Head of caudate nucleus (tissue), 42 donors: ENCODE measurements at regions of chr18 and their contacts with region 1.

Region 1: DNA sequence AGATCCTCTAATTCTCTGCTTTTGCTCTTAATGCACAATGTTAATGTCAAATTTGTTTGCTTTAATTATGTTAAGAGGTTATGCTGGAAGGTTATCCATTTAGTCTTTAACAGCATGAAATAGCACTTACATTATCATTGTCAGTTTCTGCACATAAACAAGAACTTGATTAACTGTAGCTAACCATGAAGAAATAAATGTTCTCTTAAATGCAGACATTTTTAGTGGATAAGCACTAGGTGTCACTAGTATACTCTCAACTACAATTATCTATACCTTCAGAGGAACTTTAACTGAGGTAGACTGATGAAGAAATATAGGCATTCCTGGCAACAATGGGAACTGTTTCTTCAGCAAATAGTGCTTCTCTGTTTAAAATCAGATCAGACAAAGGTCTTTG is 178.8 kb upstream of the CHST9 start:
- DNase-seq: no peak

Region 2: DNA sequence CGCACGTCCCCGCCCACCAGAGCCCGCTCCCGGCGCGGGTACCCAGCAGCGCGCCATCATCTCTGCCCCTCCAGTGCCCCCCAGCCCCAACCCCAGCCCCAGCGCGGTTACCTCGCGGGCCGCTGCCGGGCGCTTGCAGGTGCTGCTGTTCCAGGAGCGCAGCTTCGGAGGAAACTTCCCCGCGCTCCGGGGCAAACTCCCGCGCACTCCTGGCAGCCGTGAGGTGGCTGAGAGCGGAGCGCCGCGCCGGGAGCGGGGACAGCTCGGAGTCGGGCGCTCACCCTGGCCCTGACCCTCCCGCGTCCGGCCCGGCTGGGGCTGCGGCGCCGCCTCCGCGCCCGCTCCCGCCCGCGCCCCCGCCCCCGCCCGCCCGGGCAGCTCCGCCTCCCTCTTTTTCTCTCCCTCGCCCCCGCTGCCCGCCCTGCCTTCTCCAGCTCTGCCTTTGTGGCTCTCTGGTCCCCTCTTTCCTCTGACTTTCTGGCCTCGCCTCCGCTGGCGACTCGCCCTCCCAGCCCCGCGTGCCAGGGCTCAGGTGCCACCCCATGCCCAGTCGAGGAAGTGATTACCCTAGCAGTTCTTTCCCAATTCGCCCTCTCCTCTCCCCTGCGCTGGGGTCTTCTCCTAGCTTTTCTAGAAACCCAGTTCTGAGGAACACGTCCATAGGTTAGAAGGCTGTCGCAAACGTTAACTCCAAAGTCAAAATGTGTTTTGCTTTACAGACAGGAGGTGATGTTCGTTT is 178.7 kb before region 1 on chr18 and contains the start of gene CHST9:
- intact Hi-C with region 1: no loop called
- DNase-seq: peak in 40 of 42 donors; percentile 13 to 72 (median 42)

Region 3: DNA sequence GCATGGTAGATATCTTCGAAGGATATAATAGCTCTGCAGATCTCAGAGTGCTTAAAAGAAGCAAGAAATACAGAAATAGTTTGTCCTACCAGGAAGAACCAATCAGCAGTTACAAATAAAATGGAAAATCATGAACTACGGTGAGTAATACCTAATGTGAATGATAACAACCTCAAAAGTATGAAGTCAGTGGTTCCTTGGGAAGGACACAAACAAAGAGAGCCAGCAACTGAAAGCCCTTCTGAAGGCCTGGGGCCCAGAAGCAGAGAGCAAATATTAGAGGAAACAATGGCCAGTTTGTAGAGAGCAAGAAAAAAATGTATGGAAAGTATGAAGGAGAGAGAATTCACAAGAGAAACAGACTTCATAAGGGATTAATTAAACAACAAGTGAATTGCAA is 48.0 kb after region 1 on chr18:
- intact Hi-C with region 1: no loop called
- DNase-seq: no peak

Region 4: GRCh38 chr18:27599202-27599829 is 235.4 kb after region 1 on chr18:
- intact Hi-C with region 1: loop called (anchors 10 kb)
- DNase-seq: peak; percentile 15 to 87 (median 66)

Region 5: GRCh38 chr18:28576941-28577340 is 1213.1 kb after region 1 on chr18:
- intact Hi-C with region 1: no loop called
- DNase-seq: no peak